Psoas muscle (tissue), 8 donors: ENCODE measurements at regions of chr6 and their contacts with region 1.

Region 1: GRCh38 chr6:132530293-132530974 is 7.6 kb upstream of the TAAR9 start:
- DNase-seq: peak in 1 of 2 donors; percentile 39
- ATAC-seq: peak in 3 of 4 donors; percentile 70 to 89 (median 77)
- H3K4me3 ChIP-seq: peak overlapping the region; percentile 23
- H3K27ac ChIP-seq: no peak overlapping the region
- H3K4me1 ChIP-seq: no peaks in the 10 kb centered on the region
- H3K27me3 ChIP-seq: no peaks in the 10 kb centered on the region
- CTCF ChIP-seq: peak; percentile 85

Region 2: DNA sequence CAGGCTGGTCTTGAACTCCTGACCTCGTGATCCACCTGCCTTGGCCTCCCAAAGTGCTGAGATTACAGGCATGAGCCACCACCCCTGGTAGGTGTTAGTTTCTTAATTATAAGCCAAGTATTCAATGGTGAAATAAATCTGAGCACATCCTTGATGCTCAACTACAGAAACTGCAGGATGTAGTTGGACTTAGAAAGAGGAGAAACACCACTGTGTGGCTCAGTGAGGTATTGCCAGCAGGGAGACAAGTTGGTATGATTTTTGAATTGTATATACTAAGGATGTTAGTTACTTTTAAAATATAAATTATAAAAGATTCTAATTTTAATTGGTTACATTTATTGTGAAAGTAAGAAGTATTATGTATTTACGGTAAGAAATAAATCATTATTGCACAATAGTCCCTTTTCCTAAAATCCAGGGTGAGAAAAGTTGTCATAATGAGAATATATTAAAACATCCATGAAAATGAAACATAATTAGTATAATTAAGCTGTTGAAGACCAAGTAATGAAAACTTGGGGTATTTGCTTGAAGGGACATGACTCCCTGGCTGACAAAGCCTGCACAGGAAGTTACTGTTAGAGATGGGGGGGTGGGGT is 250.4 kb after region 1 on chr6:
- intact Hi-C with region 1: loop called in 1 of 2 experiments (anchors 10 kb)
- DNase-seq: no peak
- ATAC-seq: no peak
- H3K4me3 ChIP-seq: no peak overlapping the region
- H3K27ac ChIP-seq: no peak overlapping the region
- H3K4me1 ChIP-seq: no peaks in the 10 kb centered on the region
- H3K27me3 ChIP-seq: no peaks in the 10 kb centered on the region
- CTCF ChIP-seq: no peak

Region 3: DNA sequence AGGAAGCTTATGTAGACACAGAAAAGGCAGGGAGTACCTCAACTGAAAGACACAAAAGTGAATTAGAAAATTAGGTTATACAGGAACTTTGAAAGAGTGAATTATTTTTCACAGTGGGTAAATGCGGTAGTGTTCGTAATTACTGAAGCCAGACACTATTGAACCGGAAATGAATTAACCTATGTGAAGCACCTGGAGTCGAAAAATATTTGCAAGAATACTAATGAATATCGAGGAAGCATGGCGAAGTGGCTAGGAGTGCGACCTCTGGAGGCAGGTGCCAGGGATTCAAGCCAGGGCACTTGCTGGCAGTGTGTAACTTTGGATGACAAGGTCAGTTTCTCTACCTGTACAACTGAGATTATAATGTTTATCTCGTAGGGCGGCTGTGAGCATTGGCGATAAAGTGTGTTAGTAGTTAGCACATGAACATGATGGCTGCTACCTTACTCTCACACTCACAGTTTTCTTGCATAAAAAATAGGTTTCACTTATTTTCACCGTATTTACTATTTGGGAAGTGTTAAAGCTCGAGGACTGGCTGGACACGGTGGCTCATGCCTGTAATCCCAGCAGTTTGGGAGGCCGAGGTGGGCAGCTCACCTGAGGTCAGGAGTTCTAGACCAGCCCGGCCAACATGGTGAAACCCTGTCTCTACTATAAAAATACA is 268.6 kb after region 1 on chr6:
- intact Hi-C with region 1: loop called in 1 of 2 experiments (anchors 5 kb)
- DNase-seq: peak; percentile 50 to 76
- ATAC-seq: peak; percentile 84 to 93 (median 89)
- H3K4me3 ChIP-seq: peak overlapping the region; percentile 72
- H3K27ac ChIP-seq: no peak overlapping the region
- H3K4me1 ChIP-seq: no peaks in the 10 kb centered on the region
- H3K27me3 ChIP-seq: no peaks in the 10 kb centered on the region
- CTCF ChIP-seq: peak; percentile 72